MCF 10A (cell line): ENCODE measurements at regions of chr13 and their contacts with region 1.

Region 1: DNA sequence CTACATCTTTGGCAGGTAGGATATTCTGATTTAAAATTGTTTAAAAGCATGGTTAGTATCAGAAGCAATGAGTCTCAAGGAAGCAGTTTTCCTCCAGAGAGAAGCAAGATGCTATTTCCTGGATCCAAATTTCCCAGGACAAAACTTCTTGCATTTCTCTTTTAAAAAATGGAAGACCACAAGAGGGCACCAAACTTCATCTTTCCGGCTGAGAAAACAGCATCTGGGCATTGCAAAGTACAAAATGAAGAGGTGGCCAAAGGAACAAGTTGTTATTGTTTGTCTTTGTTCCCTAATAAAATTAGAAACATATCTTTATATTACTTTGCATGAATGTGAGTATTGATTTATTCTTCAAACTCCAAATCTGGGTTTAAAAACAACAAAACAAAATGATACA is 60.0 kb upstream of the LRCH1 start:
- DNase-seq: peak; percentile 55
- H3K4me3 Mint-ChIP-seq: no peak overlapping the region
- H3K27ac Mint-ChIP-seq: no peak overlapping the region
- H3K4me1 Mint-ChIP-seq: peaks cover 7% of the 10 kb centered on the region
- H3K27me3 Mint-ChIP-seq: peaks cover 42% of the 10 kb centered on the region
- CTCF ChIP-seq: peak; percentile 59

Region 2: GRCh38 chr13:46622630-46623256 is 129.8 kb after region 1 on chr13:
- CTCF ChIA-PET with region 1: no interaction called
- POLR2A ChIA-PET with region 1: no interaction called
- intact Hi-C with region 1: loop called (anchors 5 kb)
- DNase-seq: peak; percentile 85
- H3K4me3 Mint-ChIP-seq: no peak overlapping the region
- H3K27ac Mint-ChIP-seq: peak overlapping the region; percentile 51
- H3K4me1 Mint-ChIP-seq: peaks cover 14% of the 10 kb centered on the region
- H3K27me3 Mint-ChIP-seq: no peaks in the 10 kb centered on the region
- CTCF ChIP-seq: no peak

Region 3: GRCh38 chr13:46721054-46721453 is 228.1 kb after region 1 on chr13:
- CTCF ChIA-PET with region 1: interaction called, 29 read pairs
- POLR2A ChIA-PET with region 1: interaction called, 4 read pairs
- intact Hi-C with region 1: loop called (anchors 1 kb)
- DNase-seq: peak; percentile 65
- H3K4me3 Mint-ChIP-seq: no peak overlapping the region
- H3K27ac Mint-ChIP-seq: no peak overlapping the region
- H3K4me1 Mint-ChIP-seq: no peaks in the 10 kb centered on the region
- H3K27me3 Mint-ChIP-seq: no peaks in the 10 kb centered on the region
- CTCF ChIP-seq: peak; percentile 73

Region 4: GRCh38 chr13:46908501-46908900 is 415.6 kb after region 1 on chr13:
- CTCF ChIA-PET with region 1: no interaction called
- POLR2A ChIA-PET with region 1: no interaction called
- intact Hi-C with region 1: no loop called
- DNase-seq: no peak
- H3K4me3 Mint-ChIP-seq: no peak overlapping the region
- H3K27ac Mint-ChIP-seq: no peak overlapping the region
- H3K4me1 Mint-ChIP-seq: peaks cover 6% of the 10 kb centered on the region
- H3K27me3 Mint-ChIP-seq: peaks cover 11% of the 10 kb centered on the region
- CTCF ChIP-seq: no peak